ENCODE measurements at regions of chr11 and their contacts with region 1.

Region 1: DNA sequence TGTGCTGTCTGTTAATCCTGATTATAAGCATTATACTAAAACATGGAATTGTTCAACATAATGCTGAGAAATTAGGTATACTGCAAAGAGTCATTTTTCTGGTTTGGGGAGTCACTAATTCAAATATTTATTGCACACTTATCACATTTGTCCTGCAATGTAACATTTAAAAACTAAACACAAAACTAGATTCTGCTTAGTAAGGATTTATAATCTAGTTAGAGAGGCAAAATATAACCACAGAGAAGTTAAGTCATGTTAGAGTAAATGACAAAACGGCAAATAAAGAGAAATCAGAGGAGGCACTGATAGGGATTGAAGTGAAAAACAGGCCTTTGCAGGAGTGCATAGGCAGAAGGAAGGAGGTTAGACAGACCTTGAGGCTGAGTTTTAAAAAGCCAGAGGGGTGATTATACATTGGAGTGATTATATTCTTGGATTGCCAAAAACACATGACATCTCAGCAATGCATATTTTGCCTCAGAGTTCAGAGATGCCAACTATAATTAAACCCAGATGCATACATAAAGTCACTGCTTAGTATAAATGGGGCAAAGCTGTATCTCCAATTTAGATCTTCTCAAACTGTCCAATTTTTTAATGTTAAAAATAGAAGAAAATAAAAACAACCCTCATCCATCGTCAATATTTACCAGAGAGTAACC is 49.7 kb downstream of the CCDC34 start:
- DNase-seq: no peak
- H3K4me3 ChIP-seq: no peak overlapping the region
- CTCF ChIP-seq: no peak
- POLR2A ChIP-seq: no peak

Region 2: GRCh38 chr11:27381238-27381666 is 68.0 kb after region 1 on chr11:
- intact Hi-C with region 1: no loop called
- DNase-seq: no peak
- H3K4me3 ChIP-seq: no peak overlapping the region
- CTCF ChIP-seq: no peak
- POLR2A ChIP-seq: no peak

Region 3: GRCh38 chr11:28114731-28115130 is 801.4 kb after region 1 on chr11:
- intact Hi-C with region 1: loop called (anchors 5 kb)
- DNase-seq: no peak
- H3K4me3 ChIP-seq: no peak overlapping the region
- CTCF ChIP-seq: no peak
- POLR2A ChIP-seq: no peak